ENCODE measurements at regions of chr11 and their contacts with region 1.

Region 1: DNA sequence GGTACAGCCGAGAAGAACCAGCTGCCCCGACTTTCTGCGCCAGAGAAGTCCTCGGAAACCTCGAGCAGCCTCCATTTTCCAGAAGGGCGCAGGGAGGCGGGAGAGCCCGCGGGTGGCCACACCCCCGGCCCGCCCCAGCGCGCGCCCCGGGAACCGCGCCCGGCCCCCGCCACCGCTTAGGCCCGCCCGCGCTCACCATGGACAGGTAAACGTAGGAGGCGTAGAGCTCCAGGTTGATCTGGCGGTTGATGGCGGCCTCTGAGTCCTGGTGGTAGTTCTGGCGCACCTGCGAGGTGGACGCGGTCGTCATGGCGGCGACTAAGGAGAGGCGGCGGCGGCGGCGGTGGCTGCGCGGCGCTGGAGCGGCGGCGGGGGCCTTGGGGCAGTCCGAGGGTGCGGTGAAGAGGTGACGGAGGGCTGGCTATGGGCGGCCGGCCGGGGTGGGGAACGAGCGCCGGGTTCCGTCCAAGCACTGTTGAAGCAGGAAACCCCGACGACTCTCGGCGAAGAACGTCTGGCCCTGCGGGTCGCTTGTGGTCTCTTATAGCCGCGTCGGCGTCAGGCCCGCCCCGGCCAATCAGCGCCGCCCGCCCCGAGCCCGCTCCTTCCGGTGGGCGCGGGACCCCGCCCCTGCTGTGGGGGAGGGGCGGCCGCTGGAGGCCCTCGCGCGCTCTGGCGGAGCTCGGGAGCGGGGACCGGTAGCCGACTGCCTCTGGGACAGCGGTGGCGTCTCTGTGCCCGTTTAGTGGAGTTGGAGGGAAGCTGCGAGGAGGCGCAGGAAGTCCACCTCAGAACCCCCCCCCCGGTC is at the start of gene FTH1:
- DNase-seq: peak; percentile 89
- ATAC-seq: peak; percentile 81
- H3K4me3 Mint-ChIP-seq: peak within 1 kb of the TSS; percentile 86
- H3K27ac Mint-ChIP-seq: peak within 1 kb of the TSS; percentile 94
- H3K4me1 Mint-ChIP-seq: peaks cover 61% of the 10 kb centered on the region
- H3K27me3 Mint-ChIP-seq: no peaks in the 10 kb centered on the region
- CTCF ChIP-seq: no peak
- total RNA-seq, gene FTH1: 700 to 729 TPM

Region 2: DNA sequence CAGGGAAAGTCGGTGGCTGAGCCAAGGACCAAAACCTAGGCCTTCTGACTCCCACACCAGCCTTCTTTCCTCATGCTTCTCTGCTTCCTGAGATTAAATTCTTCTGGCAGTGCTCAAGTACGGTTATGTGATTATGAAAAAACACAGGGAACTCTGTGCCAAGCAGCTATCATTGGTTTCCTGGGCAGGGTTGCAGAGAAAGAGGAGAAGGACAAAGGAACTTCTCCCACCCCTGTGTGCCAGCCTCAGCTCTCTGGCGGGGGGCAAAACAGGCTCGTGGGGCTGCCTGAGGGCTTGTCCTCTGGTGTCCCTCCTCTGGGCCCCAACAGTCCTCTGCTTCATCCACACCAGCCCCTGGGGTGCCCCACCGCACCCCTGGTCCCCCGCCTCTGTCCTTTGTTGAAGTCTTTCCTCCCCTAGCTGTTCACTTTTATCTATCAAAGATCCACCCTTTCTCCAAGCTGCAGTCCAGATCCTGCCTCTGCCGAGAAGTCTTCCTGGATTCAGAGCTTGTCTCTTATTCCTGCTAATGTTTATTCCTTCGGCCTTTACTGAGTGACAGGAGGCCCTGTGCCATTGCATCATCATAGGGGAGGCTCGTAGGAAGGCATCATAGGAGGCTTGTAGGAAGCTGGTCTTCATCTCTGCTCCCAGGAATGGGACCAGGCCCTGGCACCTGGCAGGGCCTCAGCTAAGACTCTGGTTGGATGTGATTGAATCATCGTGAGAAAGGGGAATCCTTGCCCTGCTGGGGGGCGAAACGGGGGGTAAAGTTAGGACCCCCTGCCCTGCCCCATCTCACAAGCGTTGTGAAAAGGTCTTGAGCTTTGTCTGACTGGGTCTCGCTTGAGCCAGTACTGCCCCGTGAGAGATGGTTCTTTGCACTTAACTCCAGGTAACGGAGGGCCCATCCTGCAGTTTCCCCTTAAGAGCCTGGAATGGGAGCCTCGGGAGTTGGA is 11.7 kb after region 1 on chr11:
- CTCF ChIA-PET with region 1: interaction called, 4 read pairs
- POLR2A ChIA-PET with region 1: interaction called, 14 read pairs
- intact Hi-C with region 1: no loop called
- DNase-seq: no peak
- ATAC-seq: no peak
- H3K4me3 Mint-ChIP-seq: no peak overlapping the region
- H3K27ac Mint-ChIP-seq: no peak overlapping the region
- H3K4me1 Mint-ChIP-seq: peaks cover under 1% of the 10 kb centered on the region
- H3K27me3 Mint-ChIP-seq: no peaks in the 10 kb centered on the region
- CTCF ChIP-seq: no peak

Region 3: DNA sequence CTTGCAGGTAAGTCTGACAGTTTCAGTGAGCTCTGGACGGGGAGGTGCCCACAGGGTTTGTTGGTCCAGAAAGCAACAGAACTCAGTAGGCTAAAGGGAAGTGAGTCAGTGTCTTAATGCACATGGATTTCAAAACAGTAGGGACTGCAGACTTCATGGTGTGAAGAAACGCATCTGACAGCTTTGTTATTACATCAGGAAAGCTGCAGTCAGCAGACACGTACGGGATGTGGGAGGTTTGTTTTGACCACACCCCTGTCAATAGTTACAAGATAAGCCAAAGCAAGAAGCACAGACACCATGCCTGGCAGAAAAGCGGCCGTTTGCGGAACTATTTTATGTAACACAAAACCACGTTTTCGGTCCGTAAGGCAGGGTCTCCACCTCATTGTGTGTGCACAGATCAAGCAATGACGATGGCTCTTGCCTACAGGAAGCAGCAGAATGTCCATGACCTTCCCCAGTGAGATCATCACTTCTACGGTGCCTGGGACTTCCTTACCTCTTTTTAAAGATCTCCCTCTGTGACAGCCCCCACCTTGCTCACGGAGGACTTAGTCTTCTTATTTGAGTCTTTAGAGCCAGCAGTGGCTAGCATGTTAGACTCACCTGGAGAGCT is 58.3 kb after region 1 on chr11:
- CTCF ChIA-PET with region 1: no interaction called
- POLR2A ChIA-PET with region 1: interaction called, 6 read pairs
- intact Hi-C with region 1: loop called (anchors 2 kb)
- DNase-seq: peak; percentile 80
- ATAC-seq: peak; percentile 90
- H3K4me3 Mint-ChIP-seq: peak overlapping the region; percentile 62
- H3K27ac Mint-ChIP-seq: peak overlapping the region; percentile 95
- H3K4me1 Mint-ChIP-seq: peaks cover 14% of the 10 kb centered on the region
- H3K27me3 Mint-ChIP-seq: no peaks in the 10 kb centered on the region
- CTCF ChIP-seq: no peak